B cell (primary cell): ENCODE measurements at regions of chr9 and their contacts with region 1.

Region 1: GRCh38 chr9:131178382-131178781 is 53.0 kb downstream of the NUP214 start:
- DNase-seq: peak; percentile 78
- ATAC-seq: peak; percentile 92
- H3K4me3 ChIP-seq: no peak overlapping the region
- H3K4me3 Mint-ChIP-seq: no peak overlapping the region
- H3K27ac ChIP-seq: no peak overlapping the region
- H3K27ac Mint-ChIP-seq: peak overlapping the region; percentile 38
- H3K4me1 ChIP-seq: peaks cover 36 to 40% of the 10 kb centered on the region in 2 donors
- H3K4me1 Mint-ChIP-seq: peaks cover 44% of the 10 kb centered on the region
- H3K27me3 ChIP-seq: no peaks in the 10 kb centered on the region
- H3K27me3 Mint-ChIP-seq: no peaks in the 10 kb centered on the region
- CTCF ChIP-seq: peak; percentile 98

Region 2: DNA sequence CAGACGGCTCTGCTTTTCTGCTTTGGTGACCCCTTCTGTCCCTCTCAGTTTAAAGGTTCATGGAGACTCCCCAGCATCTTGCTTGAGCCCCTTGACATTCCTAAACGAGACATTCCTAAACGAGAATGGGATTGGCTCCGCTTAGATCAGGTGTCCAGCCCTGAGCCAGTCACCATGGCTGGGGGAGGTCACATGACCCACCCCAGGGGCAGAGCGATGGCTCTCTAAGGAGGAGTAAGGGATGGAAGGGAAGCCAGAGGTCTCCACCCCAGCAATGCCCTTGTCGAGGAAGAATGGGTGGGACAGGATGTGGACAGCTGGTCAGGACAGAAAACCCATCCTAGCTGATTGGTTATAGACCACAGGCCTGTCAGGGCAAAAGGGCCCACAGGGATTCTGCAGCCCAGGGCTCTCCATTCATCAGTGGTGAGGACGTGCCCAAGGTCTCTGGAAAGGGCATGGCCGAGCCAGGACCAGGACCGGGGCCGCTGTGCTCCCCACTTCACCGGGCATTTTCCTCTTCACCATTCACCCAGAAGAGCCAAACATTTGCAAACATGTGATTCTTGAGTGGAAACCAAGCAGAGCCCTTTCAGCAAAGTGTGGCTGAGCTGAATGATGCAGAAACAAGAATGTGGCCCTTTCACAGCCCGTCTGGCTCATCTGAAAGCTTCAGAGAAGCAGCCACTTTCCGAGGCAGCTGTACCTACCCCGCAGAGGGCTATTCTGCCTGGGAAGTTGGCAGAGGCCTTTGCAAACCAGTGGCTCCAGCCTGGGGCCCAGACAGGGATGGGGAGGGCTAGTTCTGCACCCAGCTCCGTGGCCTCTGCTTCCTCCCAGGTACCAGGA is 101.8 kb before region 1 on chr9:
- CTCF ChIA-PET with region 1: no interaction called
- POLR2A ChIA-PET with region 1: no interaction called
- intact Hi-C with region 1: no loop called
- DNase-seq: no peak
- ATAC-seq: no peak
- H3K4me3 ChIP-seq: no peak overlapping the region
- H3K4me3 Mint-ChIP-seq: no peak overlapping the region
- H3K27ac ChIP-seq: no peak overlapping the region
- H3K27ac Mint-ChIP-seq: no peak overlapping the region
- H3K4me1 ChIP-seq: no peaks in the 10 kb centered on the region
- H3K4me1 Mint-ChIP-seq: no peaks in the 10 kb centered on the region
- H3K27me3 ChIP-seq: no peaks in the 10 kb centered on the region
- H3K27me3 Mint-ChIP-seq: no peaks in the 10 kb centered on the region
- CTCF ChIP-seq: no peak

Region 3: GRCh38 chr9:131190191-131190590 is 11.8 kb after region 1 on chr9:
- CTCF ChIA-PET with region 1: interaction called, 41 read pairs
- POLR2A ChIA-PET with region 1: no interaction called
- intact Hi-C with region 1: no loop called
- DNase-seq: no peak
- ATAC-seq: no peak
- H3K4me3 ChIP-seq: no peak overlapping the region
- H3K4me3 Mint-ChIP-seq: no peak overlapping the region
- H3K27ac ChIP-seq: no peak overlapping the region
- H3K27ac Mint-ChIP-seq: no peak overlapping the region
- H3K4me1 ChIP-seq: no peaks in the 10 kb centered on the region
- H3K4me1 Mint-ChIP-seq: no peaks in the 10 kb centered on the region
- H3K27me3 ChIP-seq: no peaks in the 10 kb centered on the region
- H3K27me3 Mint-ChIP-seq: no peaks in the 10 kb centered on the region
- CTCF ChIP-seq: no peak

Region 4: GRCh38 chr9:131206495-131206894 is 28.1 kb after region 1 on chr9:
- CTCF ChIA-PET with region 1: interaction called, 41 read pairs
- POLR2A ChIA-PET with region 1: no interaction called
- intact Hi-C with region 1: no loop called
- DNase-seq: no peak
- ATAC-seq: no peak
- H3K4me3 ChIP-seq: no peak overlapping the region
- H3K4me3 Mint-ChIP-seq: no peak overlapping the region
- H3K27ac ChIP-seq: no peak overlapping the region
- H3K27ac Mint-ChIP-seq: no peak overlapping the region
- H3K4me1 ChIP-seq: peaks cover 9% of the 10 kb centered on the region in 2 donors
- H3K4me1 Mint-ChIP-seq: peaks cover 9% of the 10 kb centered on the region
- H3K27me3 ChIP-seq: no peaks in the 10 kb centered on the region
- H3K27me3 Mint-ChIP-seq: no peaks in the 10 kb centered on the region
- CTCF ChIP-seq: no peak

Region 5: DNA sequence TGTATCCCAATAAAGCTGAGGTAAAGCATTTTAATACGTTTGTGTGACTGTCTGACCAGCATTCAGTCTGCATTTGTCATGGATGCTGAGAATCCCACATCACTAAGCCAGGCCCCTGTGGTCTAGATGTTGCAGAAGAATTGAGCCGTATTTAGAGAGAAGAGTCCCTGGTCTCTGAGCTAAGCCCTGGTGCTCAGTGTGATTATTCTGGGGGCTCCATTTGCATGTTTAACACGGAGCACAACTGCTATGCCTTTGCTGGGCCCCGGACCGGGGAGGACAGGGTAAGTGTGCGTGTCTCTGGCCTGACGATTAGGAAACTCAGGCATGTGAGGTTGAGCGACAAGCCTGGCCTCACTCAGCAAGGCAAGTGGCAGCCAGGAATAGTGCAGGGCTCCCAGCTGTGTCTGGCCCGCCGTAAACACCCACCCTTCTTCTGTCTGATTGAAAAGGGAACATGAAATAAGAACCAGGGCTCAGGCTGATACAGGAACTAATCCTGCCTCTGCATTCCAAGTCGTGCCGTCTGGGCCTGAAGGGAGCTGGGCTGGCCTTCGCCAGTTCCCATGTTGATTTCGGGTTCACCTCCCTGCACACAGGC is 75.6 kb after region 1 on chr9:
- CTCF ChIA-PET with region 1: interaction called, 15 read pairs
- POLR2A ChIA-PET with region 1: no interaction called
- intact Hi-C with region 1: no loop called
- DNase-seq: peak; percentile 63
- ATAC-seq: peak; percentile 22
- H3K4me3 ChIP-seq: no peak overlapping the region
- H3K4me3 Mint-ChIP-seq: peak overlapping the region; percentile 81
- H3K27ac ChIP-seq: peak overlapping the region; percentile 68 to 95
- H3K27ac Mint-ChIP-seq: peak overlapping the region; percentile 96
- H3K4me1 ChIP-seq: peaks cover 50 to 61% of the 10 kb centered on the region in 2 donors
- H3K4me1 Mint-ChIP-seq: peaks cover 35% of the 10 kb centered on the region
- H3K27me3 ChIP-seq: no peaks in the 10 kb centered on the region
- H3K27me3 Mint-ChIP-seq: no peaks in the 10 kb centered on the region
- CTCF ChIP-seq: no peak

Region 6: DNA sequence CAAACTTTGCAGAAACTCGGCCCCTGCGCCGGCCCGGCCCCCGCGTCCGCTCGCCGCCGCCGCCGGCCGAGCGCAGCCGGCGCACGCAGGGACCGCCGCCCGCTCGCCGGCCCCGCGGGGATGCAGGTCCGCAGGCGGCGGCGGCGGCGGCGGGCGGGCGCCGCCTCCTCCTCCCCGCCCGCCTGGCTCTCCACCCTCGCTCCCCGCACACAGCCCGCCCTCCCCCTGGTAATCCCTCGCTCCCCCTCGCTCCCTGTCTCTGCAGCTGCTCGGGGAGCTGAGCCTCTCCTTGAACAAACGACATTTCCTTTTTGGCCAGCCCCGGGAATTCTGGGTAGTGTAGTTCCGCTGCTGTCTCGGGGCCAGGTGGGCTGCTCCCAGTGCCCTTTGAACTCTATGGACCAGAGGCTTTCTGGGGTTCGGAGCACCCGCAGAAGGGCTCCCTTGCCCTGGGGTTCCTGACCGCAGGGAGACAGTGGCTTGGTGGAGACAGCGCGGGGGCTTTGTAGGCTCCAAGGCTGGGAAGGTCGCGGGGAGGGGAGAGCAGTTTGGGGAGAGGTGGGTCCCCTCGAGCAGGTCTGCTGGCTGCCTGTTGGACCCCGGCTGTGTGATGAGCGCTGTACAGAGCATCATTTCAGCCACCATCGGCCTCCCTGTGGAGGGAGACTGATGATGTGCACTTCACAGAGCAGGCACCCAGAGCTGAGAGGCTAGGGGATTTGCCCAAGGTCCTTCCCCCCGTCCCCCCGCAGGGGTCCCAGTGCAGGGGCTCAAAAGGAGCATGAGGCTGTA is 99.7 kb after region 1 on chr9:
- CTCF ChIA-PET with region 1: interaction called, 37 read pairs
- POLR2A ChIA-PET with region 1: no interaction called
- intact Hi-C with region 1: loop called (anchors 1 kb)
- DNase-seq: peak; percentile 82
- ATAC-seq: peak; percentile 58
- H3K4me3 ChIP-seq: peak overlapping the region in 4 of 5 experiments; percentile 11 to 95 (median 78)
- H3K4me3 Mint-ChIP-seq: peak overlapping the region; percentile 85
- H3K27ac ChIP-seq: peak overlapping the region; percentile 28 to 71
- H3K27ac Mint-ChIP-seq: peak overlapping the region; percentile 87
- H3K4me1 ChIP-seq: peaks cover 33 to 36% of the 10 kb centered on the region in 2 donors
- H3K4me1 Mint-ChIP-seq: peaks cover 40% of the 10 kb centered on the region
- H3K27me3 ChIP-seq: peaks cover 0 to 16% (median 5%) of the 10 kb centered on the region in 4 experiments
- H3K27me3 Mint-ChIP-seq: peaks cover 10% of the 10 kb centered on the region
- CTCF ChIP-seq: no peak

Region 7: DNA sequence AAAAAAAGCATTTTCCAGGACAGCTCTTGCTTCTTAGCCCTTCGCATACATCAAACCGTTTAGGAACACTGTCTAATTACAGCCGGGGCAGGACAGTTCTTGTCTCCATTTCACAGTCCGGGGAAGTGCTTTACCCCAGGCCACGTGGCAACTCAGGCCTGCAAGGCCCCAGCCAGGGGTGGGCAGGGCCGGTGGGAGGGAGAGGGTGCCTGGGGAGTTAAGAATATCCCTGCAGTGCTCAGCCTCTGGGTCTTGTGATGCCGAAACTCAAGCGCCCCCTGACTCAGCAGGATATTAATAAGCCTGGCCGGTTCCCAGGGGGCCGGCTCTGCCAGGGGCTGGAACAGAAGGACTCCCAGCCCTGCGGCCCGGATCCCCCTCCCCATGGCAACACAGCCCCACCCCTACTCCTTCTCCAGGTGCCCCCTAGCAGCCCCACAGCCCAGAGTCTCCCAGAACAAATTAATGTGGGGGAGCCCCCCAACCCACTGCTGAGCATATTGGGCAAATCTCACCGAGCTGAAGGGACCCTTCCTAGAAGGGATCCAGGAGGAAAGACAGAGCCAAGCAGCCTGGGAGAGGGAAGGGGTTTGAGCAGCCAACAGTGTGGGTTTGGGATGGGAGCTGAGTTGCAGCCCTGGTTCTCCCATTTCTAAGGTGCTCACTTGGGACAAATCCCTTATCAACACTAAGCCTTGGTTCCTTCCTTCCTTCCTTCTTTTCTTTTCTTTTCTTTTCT is 156.4 kb after region 1 on chr9:
- CTCF ChIA-PET with region 1: interaction called, 332 read pairs
- POLR2A ChIA-PET with region 1: interaction called, 7 read pairs
- intact Hi-C with region 1: no loop called
- DNase-seq: no peak
- ATAC-seq: no peak
- H3K4me3 ChIP-seq: no peak overlapping the region
- H3K4me3 Mint-ChIP-seq: no peak overlapping the region
- H3K27ac ChIP-seq: no peak overlapping the region
- H3K27ac Mint-ChIP-seq: no peak overlapping the region
- H3K4me1 ChIP-seq: peaks cover 0 to 4% of the 10 kb centered on the region in 2 donors
- H3K4me1 Mint-ChIP-seq: peaks cover 4% of the 10 kb centered on the region
- H3K27me3 ChIP-seq: peaks cover 0 to 4% (median 0%) of the 10 kb centered on the region in 4 experiments
- H3K27me3 Mint-ChIP-seq: no peaks in the 10 kb centered on the region
- CTCF ChIP-seq: no peak